ENCODE measurements at regions of chr11 and their contacts with region 1.

Region 1: DNA sequence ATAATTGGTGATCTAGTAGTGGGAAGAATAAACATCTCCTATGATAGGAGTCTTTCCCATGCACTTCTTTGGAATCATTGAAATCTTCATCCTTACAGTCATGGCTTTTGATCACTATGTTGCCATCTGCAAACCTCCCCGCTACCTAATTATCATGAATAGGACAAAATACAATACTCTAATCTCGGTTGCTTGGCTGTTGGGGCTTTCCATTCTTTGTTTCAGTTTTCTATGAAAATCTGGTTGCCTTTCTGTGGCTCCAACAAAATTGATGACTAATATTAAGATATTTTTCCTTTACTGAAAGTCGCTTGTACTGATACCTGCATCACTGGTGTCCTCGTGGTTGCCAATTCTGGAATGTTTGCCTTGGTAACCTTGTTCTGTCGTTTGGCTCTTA is 11.9 kb downstream of the OR4C6 start:
- DNase-seq: no peak
- H3K4me3 Mint-ChIP-seq: no peak overlapping the region
- H3K27ac Mint-ChIP-seq: no peak overlapping the region
- H3K4me1 Mint-ChIP-seq: no peaks in the 10 kb centered on the region
- H3K27me3 Mint-ChIP-seq: no peaks in the 10 kb centered on the region
- CTCF ChIP-seq: no peak

Region 2: GRCh38 chr11:55726715-55727324 is 53.0 kb after region 1 on chr11:
- CTCF ChIA-PET with region 1: no interaction called
- POLR2A ChIA-PET with region 1: no interaction called
- intact Hi-C with region 1: loop called (anchors 10 kb)
- DNase-seq: no peak
- H3K4me3 Mint-ChIP-seq: no peak overlapping the region
- H3K27ac Mint-ChIP-seq: no peak overlapping the region
- H3K4me1 Mint-ChIP-seq: no peaks in the 10 kb centered on the region
- H3K27me3 Mint-ChIP-seq: no peaks in the 10 kb centered on the region
- CTCF ChIP-seq: no peak